Activated naive CD4-positive, alpha-beta T cell treated with anti-CD3 and anti-CD28 coated beads for 36 hours (primary cell): ENCODE measurements at regions of chr4 and their contacts with region 1.

Region 1: DNA sequence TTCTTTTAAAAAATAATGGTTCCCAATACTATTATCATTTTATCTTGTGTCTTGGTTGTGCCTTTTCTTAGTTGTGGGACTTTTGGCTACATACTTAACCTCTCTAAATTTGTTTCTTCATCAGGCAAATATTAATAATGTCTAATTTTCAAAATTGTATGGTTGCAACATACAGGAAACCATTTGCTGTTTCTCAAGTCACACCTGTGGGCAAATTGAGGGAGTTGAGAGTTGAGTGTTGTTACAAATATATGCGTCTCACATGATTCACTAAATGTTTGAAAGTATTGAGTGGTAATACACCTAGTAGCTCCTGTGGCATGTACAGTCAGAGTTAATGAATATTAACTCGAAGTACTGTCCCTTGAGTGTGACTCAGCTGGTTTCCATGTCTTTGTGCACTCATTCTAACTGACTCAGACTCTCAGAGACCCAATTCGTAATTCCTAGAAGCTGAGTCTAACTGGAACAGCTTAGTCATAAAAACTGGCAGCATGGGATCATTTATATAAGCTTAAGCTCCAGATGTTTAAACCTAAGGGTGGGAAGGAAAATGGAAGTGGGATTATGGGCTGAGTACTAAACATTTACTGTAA is 802.4 kb downstream of the TRIML1 start:
- DNase-seq: no peak
- H3K4me3 Mint-ChIP-seq: no peak overlapping the region
- H3K27ac Mint-ChIP-seq: no peak overlapping the region
- H3K4me1 Mint-ChIP-seq: no peaks in the 10 kb centered on the region
- H3K27me3 Mint-ChIP-seq: no peaks in the 10 kb centered on the region

Region 2: DNA sequence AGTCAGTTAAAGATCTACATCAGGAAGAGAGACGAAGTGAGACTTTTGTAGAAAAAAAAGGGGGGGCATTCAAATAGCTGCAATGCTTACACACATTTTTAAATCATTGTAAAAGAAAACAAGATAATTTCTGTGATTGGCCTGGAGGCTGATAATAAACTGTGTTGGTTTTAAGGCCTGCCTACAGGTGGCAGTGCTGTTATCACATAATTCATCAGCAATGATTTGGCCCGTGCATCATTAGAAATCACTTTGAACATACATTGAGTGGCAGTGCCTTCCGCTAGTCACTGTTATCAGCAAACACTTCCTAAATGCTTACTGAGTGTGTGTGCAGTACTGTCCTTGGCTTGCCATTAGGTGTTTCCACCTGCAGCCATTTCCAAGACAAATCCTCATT is 29.5 kb after region 1 on chr4:
- CTCF ChIA-PET with region 1: no interaction called
- intact Hi-C with region 1: loop called (anchors 1 kb)
- DNase-seq: no peak
- H3K4me3 Mint-ChIP-seq: no peak overlapping the region
- H3K27ac Mint-ChIP-seq: no peak overlapping the region
- H3K4me1 Mint-ChIP-seq: no peaks in the 10 kb centered on the region
- H3K27me3 Mint-ChIP-seq: no peaks in the 10 kb centered on the region